ENCODE measurements at regions of chr6 and their contacts with region 1.

Region 1: GRCh38 chr6:89483111-89483720 is 50.3 kb downstream of the ANKRD6 start:
- DNase-seq: peak in 1 of 2 donors; percentile 75
- H3K4me3 ChIP-seq: peak overlapping the region in 1 of 2 donors; percentile 42
- H3K27ac ChIP-seq: peak overlapping the region; percentile 70 to 77
- H3K4me1 ChIP-seq: peaks cover 20 to 52% of the 10 kb centered on the region in 2 donors
- H3K27me3 ChIP-seq: no peaks in the 10 kb centered on the region
- CTCF ChIP-seq: no peak

Region 2: GRCh38 chr6:89007209-89008000 is 475.8 kb before region 1 on chr6:
- intact Hi-C with region 1: no loop called
- DNase-seq: no peak
- H3K4me3 ChIP-seq: no peak overlapping the region
- H3K27ac ChIP-seq: no peak overlapping the region
- H3K4me1 ChIP-seq: no peaks in the 10 kb centered on the region
- H3K27me3 ChIP-seq: no peaks in the 10 kb centered on the region
- CTCF ChIP-seq: no peak

Region 3: DNA sequence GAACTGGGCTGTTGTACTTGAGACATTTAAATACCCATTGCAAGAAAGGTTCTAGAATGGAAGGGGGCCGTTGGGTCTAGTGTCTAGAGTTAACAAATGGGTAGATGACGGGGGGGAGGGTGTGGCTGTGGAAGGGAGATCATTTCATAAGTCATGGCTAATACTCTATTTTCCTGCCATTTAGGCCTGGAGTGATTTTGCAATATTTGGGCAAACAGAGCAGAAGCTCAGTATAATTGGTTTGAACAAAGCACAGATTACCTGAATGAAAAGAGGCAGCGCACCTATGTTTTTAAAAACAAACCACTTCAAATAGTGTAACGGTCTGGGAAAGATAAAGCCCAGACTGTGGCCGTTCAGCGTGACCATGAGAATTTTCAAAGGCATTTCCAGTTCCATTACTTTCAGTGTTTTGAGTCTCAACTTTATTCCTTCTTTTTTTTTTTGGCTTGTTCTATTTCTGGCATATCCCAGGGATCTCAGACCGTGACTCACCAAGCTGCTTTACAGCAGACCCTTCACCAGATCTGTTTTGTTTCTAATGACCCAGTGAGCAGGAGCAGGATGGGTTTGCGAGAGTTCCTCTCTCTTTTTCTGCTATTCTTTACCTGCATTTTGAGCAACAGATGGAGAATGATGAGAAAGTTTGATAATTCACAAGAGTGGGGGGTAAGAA is 81.7 kb after region 1 on chr6:
- intact Hi-C with region 1: loop called (anchors 2 kb)
- DNase-seq: no peak
- H3K4me3 ChIP-seq: peak overlapping the region; percentile 1 to 36
- H3K27ac ChIP-seq: peak overlapping the region; percentile 77 to 79
- H3K4me1 ChIP-seq: peaks cover 15 to 49% of the 10 kb centered on the region in 2 donors
- H3K27me3 ChIP-seq: no peaks in the 10 kb centered on the region
- CTCF ChIP-seq: no peak

Region 4: GRCh38 chr6:89597988-89598692 is 114.9 kb after region 1 on chr6:
- intact Hi-C with region 1: loop called (anchors 2 kb)
- DNase-seq: peak in 1 of 2 donors; percentile 66
- H3K4me3 ChIP-seq: no peak overlapping the region
- H3K27ac ChIP-seq: peak overlapping the region in 1 of 2 donors; percentile 3
- H3K4me1 ChIP-seq: peaks cover 3 to 10% of the 10 kb centered on the region in 2 donors
- H3K27me3 ChIP-seq: no peaks in the 10 kb centered on the region
- CTCF ChIP-seq: peak; percentile 23 to 44 (median 37)